ENCODE measurements at regions of chr19 and their contacts with region 1.

Region 1: DNA sequence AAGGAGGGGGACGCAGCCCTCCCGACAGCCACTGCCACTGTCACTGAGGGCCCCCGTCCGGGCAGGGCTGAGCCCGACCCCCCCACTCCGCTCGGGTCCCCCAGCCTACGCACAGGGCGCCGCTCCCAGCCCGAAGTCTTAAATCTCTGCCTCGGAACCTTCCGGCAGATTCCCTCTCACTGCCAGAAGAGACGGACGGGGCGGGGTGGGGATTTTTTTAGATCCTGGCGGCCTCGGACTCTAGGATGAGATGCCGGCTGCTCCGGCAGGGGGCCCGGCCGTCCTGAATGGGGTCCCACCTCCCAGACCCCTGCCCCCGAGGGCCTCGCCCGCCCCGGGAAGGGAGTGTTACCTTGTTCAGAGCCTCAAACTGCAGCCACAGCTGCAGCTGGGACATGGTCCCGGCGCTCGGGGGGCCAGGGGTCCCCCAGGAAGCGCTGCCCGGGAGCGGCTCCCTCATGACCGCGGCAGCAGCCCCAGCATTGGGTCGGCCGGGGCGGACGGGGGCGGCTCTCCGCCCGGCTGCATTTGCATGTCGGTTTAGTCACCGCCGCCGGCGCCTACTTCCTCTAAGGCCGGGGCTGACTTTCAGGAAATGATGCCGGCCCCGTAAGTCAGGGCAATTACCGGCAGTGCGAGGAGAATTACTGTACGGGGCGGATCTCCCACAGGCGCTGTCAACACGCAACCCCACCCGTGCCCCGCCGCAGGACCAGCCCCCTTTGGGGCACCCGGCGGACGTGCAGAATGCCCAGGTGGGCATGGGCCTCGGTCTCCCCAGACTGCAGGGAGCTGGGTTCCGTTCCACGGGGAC is 28.2 kb downstream of the GPX4 start:
- DNase-seq: peak; percentile 88
- ATAC-seq: peak; percentile 82
- H3K4me3 ChIP-seq: peak overlapping the region; percentile 61
- H3K27ac ChIP-seq: peak overlapping the region; percentile 95
- H3K4me1 ChIP-seq: peaks cover 24% of the 10 kb centered on the region
- H3K27me3 ChIP-seq: no peaks in the 10 kb centered on the region
- CTCF ChIP-seq: peak; percentile 14; the same call in 1 of the 2 replicates
- POLR2A ChIP-seq: peak; percentile 77; the same call in 1 of the 2 replicates
- RAD21 ChIP-seq: 0 out of 2 replicates have a peak, but pooled peaks have one; percentile 5

Region 2: GRCh38 chr19:1173845-1174809 is 42.2 kb after region 1 on chr19 and contains the start of gene SBNO2:
- CTCF ChIA-PET with region 1: no interaction called
- POLR2A ChIA-PET with region 1: no interaction called
- dilution Hi-C with region 1: no loop called
- in situ Hi-C with region 1: no loop called
- intact Hi-C with region 1: loop called (anchors 5 kb)
- DNase-seq: peak; percentile 80
- ATAC-seq: peak; percentile 56
- H3K4me3 ChIP-seq: peak within 1 kb of the TSS; percentile 92
- H3K27ac ChIP-seq: peak within 1 kb of the TSS; percentile 99
- H3K4me1 ChIP-seq: peaks cover 37% of the 10 kb centered on the region
- H3K27me3 ChIP-seq: no peaks in the 10 kb centered on the region
- CTCF ChIP-seq: no peak
- POLR2A ChIP-seq: peak; percentile 90
- RAD21 ChIP-seq: no peak
- total RNA-seq, gene SBNO2: 13.4 and 13.6 TPM in 2 replicates